ENCODE measurements at regions of chr3 and their contacts with region 1.

Region 1: GRCh38 chr3:141114816-141115460 is 63.8 kb downstream of the SPSB4 start:
- DNase-seq: no peak
- ATAC-seq: peak; percentile 32 to 51
- H3K4me3 ChIP-seq: no peak overlapping the region
- H3K27ac ChIP-seq: peak overlapping the region; percentile 63
- H3K4me1 ChIP-seq: peaks cover 5% of the 10 kb centered on the region
- H3K27me3 ChIP-seq: no peaks in the 10 kb centered on the region

Region 2: GRCh38 chr3:141000027-141000663 is 114.8 kb before region 1 on chr3:
- intact Hi-C with region 1: loop called in 1 of 4 experiments (anchors 5 kb)
- DNase-seq: peak; percentile 68 to 84 (median 81)
- ATAC-seq: peak; percentile 94 to 96
- H3K4me3 ChIP-seq: no peak overlapping the region
- H3K27ac ChIP-seq: no peak overlapping the region
- H3K4me1 ChIP-seq: no peaks in the 10 kb centered on the region
- H3K27me3 ChIP-seq: no peaks in the 10 kb centered on the region

Region 3: DNA sequence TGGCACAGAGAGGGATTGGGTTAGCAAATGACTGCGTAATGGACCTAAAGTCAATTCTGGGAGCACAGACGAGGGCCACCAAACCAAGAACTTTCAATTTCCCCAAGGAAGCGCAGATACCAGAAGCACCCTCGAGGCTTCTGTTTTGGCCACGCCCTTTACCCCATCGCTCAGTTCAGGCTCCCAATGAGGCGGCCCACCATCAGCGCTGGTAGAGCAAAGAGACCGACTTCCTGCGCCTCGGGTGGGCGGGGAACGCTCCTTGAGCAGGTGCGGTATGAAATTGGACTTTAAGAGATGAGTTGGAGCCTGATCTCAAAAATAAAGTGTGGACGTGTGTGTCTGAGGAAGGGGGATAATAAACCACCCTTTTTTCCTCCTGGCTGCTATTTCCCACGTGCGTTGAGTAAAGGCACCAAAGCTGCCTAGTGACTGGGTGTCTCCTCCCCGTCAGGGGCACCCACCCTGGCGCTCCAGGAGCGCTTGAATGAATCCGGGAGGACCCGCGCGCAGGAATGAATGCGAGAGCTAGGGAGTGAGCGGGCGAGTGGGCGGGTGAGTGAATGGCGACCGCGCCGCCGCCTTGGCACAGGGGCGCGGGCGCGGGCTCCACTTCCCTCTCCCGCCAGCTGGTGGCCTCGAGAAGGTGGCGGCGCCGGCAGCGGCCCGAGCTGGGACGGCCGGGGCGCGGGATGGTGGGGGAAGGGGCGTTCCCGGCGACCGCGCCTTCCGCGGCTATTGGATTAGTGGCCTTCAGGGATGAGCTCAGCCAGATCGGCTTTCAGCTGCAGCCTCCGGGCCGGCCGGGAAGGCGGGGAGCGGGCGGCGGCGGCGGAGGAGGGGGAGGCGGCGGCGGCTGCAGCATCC is 64.1 kb before region 1 on chr3 and contains the start of gene SPSB4:
- intact Hi-C with region 1: loop called in 1 of 4 experiments (anchors 10 kb)
- DNase-seq: peak; percentile 71 to 89 (median 89)
- ATAC-seq: peak; percentile 89 to 92
- H3K4me3 ChIP-seq: peak within 1 kb of the TSS; percentile 71
- H3K27ac ChIP-seq: peak within 1 kb of the TSS; percentile 32
- H3K4me1 ChIP-seq: peaks cover 2% of the 10 kb centered on the region
- H3K27me3 ChIP-seq: no peaks in the 10 kb centered on the region
- total RNA-seq, gene SPSB4: 1.1 to 9.7 (median 5.4) TPM

Region 4: DNA sequence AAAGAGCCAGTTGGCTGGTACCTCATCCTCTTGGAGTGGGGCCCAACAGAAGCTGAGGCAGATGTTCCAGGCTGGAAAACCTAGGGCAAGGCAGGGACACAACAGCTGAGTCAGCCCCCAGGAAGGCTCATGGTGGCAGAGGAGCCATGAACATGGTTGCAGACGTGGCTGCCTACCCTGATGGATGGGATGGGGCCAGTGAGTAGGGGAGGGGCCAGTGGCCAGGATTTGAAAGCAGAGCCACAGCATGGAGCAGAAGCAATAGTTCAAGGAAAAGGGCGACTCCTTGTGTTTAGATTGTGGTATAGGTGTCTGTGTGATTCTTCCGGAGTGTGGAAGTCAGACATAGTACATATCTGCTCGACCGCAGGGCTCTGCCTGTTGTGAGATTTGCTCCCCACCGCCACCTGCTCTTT is 140.9 kb after region 1 on chr3:
- intact Hi-C with region 1: no loop called
- DNase-seq: no peak
- ATAC-seq: peak; percentile 50 to 53
- H3K4me3 ChIP-seq: no peak overlapping the region
- H3K27ac ChIP-seq: no peak overlapping the region
- H3K4me1 ChIP-seq: peaks cover 2% of the 10 kb centered on the region
- H3K27me3 ChIP-seq: no peaks in the 10 kb centered on the region

Region 5: DNA sequence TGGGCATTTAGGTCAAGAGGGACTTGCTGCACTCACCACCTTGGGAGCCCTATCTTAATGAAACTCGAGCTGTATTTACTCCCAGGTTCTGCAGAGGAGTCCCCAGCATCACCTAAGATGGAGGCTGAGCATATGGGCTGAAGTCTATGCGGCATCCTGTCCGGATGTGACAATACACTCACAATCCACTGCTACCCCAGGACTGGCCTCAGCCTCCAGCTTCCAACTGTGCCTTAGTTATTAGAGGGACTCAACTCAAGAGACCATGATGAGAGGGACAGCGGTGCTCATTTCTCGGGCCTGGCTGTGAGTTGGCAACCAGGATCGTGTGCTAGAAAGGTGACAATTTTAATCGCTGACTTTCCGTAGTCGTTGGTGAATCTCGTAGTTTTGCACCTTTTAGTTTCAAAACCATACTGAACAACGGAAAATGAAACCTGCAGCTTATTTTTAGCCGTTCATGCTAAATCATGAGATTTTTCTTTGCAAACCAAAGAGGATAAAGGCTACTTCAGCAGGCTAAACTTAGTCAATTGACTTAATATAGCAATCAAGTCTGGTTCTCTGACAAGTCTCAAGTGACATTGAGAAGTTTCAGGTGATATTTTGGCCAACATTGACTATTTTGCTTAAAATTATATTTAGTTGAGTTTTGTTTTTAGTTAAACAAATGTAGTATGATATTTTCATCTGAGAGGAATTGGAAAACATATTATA is 264.5 kb after region 1 on chr3:
- intact Hi-C with region 1: no loop called
- DNase-seq: no peak
- ATAC-seq: no peak
- H3K4me3 ChIP-seq: no peak overlapping the region
- H3K27ac ChIP-seq: no peak overlapping the region
- H3K4me1 ChIP-seq: peaks cover 2% of the 10 kb centered on the region
- H3K27me3 ChIP-seq: no peaks in the 10 kb centered on the region

Measured in right cardiac atrium (tissue), 5 donors.